Panc1 (cell line): ENCODE measurements at regions of chr20 and their contacts with region 1.

Region 1: GRCh38 chr20:23350196-23350903 is at the start of gene NXT1:
- DNase-seq: peak; percentile 92
- ATAC-seq: peak; percentile 95
- H3K4me3 ChIP-seq: peak within 1 kb of the TSS; percentile 92 to 98
- H3K27ac ChIP-seq: peak within 1 kb of the TSS; percentile 98
- H3K4me1 ChIP-seq: peaks cover 17% of the 10 kb centered on the region
- H3K27me3 ChIP-seq: no peaks in the 10 kb centered on the region
- CTCF ChIP-seq: no peak
- total RNA-seq, gene NXT1: 31.3 TPM

Region 2: DNA sequence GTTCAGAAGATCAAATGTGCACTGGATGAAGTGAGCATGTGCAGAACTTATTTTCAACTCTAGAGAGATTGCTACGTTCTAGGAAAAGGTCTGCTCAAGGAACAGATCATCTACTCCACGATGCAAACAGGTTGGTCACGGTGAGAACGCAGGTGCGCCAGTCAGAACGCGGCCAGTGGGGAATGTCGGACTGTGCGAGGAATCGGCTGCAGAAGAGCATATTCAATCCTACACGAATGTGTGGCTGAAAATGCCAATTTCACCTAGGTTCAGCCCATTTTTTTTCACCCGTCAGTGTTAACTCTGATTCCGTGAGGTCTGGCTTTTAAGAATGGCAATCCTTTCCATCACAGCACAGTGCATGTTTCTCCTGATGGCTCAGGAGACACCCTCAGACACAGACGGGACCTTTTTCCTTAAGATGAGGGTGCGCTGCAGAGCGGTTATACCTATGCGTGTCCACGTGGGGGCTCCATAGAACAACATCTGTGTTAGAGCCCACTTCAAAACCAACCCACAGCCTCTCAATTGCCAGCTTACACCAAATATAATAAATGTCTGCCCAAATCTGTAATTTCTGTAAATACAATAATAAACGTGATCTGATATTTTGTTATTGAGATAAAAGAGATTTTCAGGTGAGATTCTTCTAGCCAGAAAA is 1016.3 kb before region 1 on chr20:
- CTCF ChIA-PET with region 1: no interaction called
- POLR2A ChIA-PET with region 1: no interaction called
- in situ Hi-C with region 1: no loop called
- intact Hi-C with region 1: loop called (anchors 10 kb)
- DNase-seq: no peak
- ATAC-seq: no peak; the same call in none of the 2 replicates
- H3K4me3 ChIP-seq: no peak overlapping the region
- H3K27ac ChIP-seq: no peak overlapping the region
- H3K4me1 ChIP-seq: no peaks in the 10 kb centered on the region
- H3K27me3 ChIP-seq: peaks cover 6% of the 10 kb centered on the region; the same call in 1 of the 2 replicates
- CTCF ChIP-seq: peak; percentile 91

Region 3: GRCh38 chr20:22575087-22575721 is 775.1 kb before region 1 on chr20:
- CTCF ChIA-PET with region 1: no interaction called
- POLR2A ChIA-PET with region 1: no interaction called
- in situ Hi-C with region 1: no loop called
- intact Hi-C with region 1: loop called (anchors 10 kb)
- DNase-seq: no peak
- ATAC-seq: peak; percentile 37
- H3K4me3 ChIP-seq: peak overlapping the region in 1 of 2 experiments; percentile 10; a peak in 1 of 4 replicates
- H3K27ac ChIP-seq: peak overlapping the region; percentile 94
- H3K4me1 ChIP-seq: peaks cover 73% of the 10 kb centered on the region
- H3K27me3 ChIP-seq: no peaks in the 10 kb centered on the region
- CTCF ChIP-seq: no peak

Region 4: GRCh38 chr20:22586645-22587310 is 763.6 kb before region 1 on chr20:
- CTCF ChIA-PET with region 1: no interaction called
- POLR2A ChIA-PET with region 1: interaction called, 12 read pairs
- in situ Hi-C with region 1: no loop called
- intact Hi-C with region 1: no loop called
- DNase-seq: no peak
- ATAC-seq: peak; percentile 45
- H3K4me3 ChIP-seq: peak overlapping the region; percentile 46 to 70
- H3K27ac ChIP-seq: peak overlapping the region; percentile 69
- H3K4me1 ChIP-seq: peaks cover 3% of the 10 kb centered on the region
- H3K27me3 ChIP-seq: peaks cover 2% of the 10 kb centered on the region; the same call in 1 of the 2 replicates
- CTCF ChIP-seq: peak; percentile 97

Region 5: GRCh38 chr20:23242104-23242930 is 108.0 kb before region 1 on chr20:
- CTCF ChIA-PET with region 1: interaction called, 11 read pairs
- POLR2A ChIA-PET with region 1: no interaction called
- in situ Hi-C with region 1: no loop called
- intact Hi-C with region 1: no loop called
- DNase-seq: no peak
- ATAC-seq: no peak
- H3K4me3 ChIP-seq: no peak overlapping the region
- H3K27ac ChIP-seq: no peak overlapping the region
- H3K4me1 ChIP-seq: no peaks in the 10 kb centered on the region
- H3K27me3 ChIP-seq: no peaks in the 10 kb centered on the region
- CTCF ChIP-seq: no peak

Region 6: GRCh38 chr20:23257848-23258746 is 92.3 kb before region 1 on chr20:
- CTCF ChIA-PET with region 1: no interaction called
- POLR2A ChIA-PET with region 1: no interaction called
- in situ Hi-C with region 1: no loop called
- intact Hi-C with region 1: loop called (anchors 10 kb)
- DNase-seq: no peak
- ATAC-seq: peak; percentile 63
- H3K4me3 ChIP-seq: no peak overlapping the region
- H3K27ac ChIP-seq: no peak overlapping the region
- H3K4me1 ChIP-seq: no peaks in the 10 kb centered on the region
- H3K27me3 ChIP-seq: 0 out of 2 replicates have a peak, but pooled peaks cover 2% of the 10 kb centered on the region
- CTCF ChIP-seq: no peak

Region 7: DNA sequence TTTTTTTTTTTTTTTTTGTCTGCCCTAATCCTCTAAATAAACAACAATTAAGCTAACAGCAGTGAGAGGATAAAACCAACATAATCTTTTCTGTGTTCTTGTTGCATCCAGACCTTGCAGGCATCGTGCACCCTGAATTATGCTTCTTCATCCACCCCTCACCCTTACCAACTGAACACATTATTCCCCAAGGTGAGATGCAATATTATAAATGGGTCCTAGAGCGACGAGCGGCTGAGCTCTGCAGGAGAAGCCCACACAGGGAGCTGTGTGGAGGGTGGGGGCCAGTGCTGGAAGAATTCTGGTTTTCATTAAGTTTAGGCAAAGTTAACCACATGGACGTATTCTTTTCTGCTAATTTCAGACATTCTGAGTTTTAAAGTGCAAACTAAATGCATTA is 32.0 kb before region 1 on chr20:
- CTCF ChIA-PET with region 1: interaction called, 12 read pairs
- POLR2A ChIA-PET with region 1: no interaction called
- in situ Hi-C with region 1: no loop called
- intact Hi-C with region 1: no loop called
- DNase-seq: no peak
- ATAC-seq: no peak
- H3K4me3 ChIP-seq: no peak overlapping the region
- H3K27ac ChIP-seq: no peak overlapping the region
- H3K4me1 ChIP-seq: no peaks in the 10 kb centered on the region
- H3K27me3 ChIP-seq: 0 out of 2 replicates have a peak, but pooled peaks cover 3% of the 10 kb centered on the region
- CTCF ChIP-seq: no peak